ENCODE measurements at regions of chr12 and their contacts with region 1.

Region 1: GRCh38 chr12:47156167-47156736 is 76.5 kb upstream of the AMIGO2 start:
- DNase-seq: peak; percentile 58
- H3K4me3 ChIP-seq: no peak overlapping the region
- H3K27ac ChIP-seq: no peak overlapping the region
- H3K4me1 ChIP-seq: no peaks in the 10 kb centered on the region
- H3K27me3 ChIP-seq: no peaks in the 10 kb centered on the region
- CTCF ChIP-seq: no peak
- POLR2A ChIP-seq: no peak

Region 2: DNA sequence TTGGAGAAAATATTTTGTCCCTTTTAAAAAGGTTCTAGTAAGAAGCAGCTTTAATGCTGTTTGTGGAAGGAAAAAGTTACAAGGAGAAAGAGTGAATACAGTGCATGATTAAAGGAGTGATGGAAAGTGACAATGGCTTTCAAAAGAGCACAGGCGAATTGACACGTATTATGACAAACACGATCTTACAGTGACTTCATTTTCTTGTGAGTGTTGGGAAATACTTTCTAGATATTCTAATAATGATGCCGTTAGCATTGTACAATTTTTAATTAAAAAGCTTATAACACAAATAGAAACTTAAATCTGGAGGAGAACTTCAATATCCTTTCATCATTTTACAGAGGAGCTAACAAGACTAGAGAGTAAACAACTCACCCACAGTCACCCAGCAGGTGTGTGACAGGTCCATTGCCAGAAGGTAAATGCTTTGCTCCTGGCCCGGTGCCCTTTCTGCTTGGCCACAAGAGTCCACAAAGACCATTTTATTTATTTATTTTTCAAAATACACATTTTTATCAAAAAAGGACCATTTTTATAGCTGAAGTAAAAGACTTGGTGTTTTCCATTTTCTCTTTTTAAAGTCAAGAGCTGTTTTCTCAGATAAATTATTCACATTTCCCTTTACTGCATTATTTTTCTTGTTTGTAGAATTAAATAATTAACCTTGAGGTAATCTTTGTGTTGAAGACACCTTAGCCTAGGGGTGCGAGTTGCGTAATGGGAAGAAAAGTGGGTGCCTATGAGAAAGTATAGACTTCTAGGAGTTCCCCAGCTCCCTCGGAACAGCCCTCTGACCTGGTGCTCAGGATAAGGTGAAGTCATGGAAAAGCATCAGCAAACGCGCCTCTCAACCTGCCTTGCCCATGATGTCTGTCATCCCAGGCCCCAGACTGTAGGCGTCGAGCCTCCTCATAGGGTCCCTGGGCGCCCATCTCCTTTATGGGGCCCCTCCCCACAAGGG is 50.3 kb before region 1 on chr12:
- CTCF ChIA-PET with region 1: no interaction called
- POLR2A ChIA-PET with region 1: no interaction called
- dilution Hi-C with region 1: no loop called
- intact Hi-C with region 1: loop called (anchors 5 kb)
- DNase-seq: no peak
- H3K4me3 ChIP-seq: no peak overlapping the region
- H3K27ac ChIP-seq: no peak overlapping the region
- H3K4me1 ChIP-seq: no peaks in the 10 kb centered on the region
- H3K27me3 ChIP-seq: no peaks in the 10 kb centered on the region
- CTCF ChIP-seq: no peak
- POLR2A ChIP-seq: no peak